Esophagus squamous epithelium (tissue), 5 donors: ENCODE measurements at regions of chr2 and their contacts with region 1.

Region 1: DNA sequence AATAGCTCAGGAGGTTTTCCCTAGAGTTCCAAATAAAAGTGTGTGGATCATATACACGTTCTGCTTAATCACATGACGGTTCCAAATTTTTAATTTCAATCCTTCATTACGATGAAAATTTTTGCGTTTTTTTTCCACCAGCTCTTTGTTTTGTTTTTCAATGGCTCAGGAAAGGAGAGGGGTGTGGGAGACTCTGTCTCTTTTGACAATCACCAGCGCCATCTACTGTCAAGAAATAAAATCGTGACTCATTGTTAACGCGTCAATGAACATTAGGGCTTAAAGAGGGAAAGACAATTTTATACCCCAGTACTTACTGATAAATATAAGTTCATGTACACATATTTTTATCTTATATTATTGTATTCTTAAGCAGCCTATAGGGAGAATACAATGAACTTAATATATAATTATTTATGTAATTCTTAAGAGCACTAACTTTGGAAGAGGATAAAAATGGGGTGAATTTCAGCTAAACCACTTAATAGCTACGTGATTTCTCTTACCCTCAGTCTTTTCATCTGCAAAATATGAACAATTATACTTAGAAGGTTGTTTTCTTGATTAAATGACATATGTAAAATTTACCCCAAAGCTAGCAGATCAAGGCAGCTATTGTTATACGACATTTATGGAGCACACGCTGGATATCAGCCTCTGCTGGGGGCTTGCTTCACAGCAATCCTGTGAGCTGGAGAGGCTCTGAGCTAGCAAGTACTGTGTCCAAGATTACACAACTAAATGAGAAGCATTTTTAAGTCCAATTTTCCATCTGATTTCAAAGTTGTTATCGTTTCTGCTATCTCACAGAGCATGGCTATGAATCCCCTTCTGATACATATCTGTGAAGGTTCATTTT is 47.4 kb upstream of the RMDN2 start:
- DNase-seq: no peak
- H3K4me3 ChIP-seq: no peak overlapping the region
- H3K27ac ChIP-seq: no peak overlapping the region
- H3K4me1 ChIP-seq: peaks cover 0 to 11% (median 0%) of the 10 kb centered on the region in 3 donors
- H3K27me3 ChIP-seq: peaks cover 0 to 31% (median 0%) of the 10 kb centered on the region in 4 donors
- CTCF ChIP-seq: peak; percentile 45 to 81 (median 70)
- POLR2A ChIP-seq: no peak

Region 2: DNA sequence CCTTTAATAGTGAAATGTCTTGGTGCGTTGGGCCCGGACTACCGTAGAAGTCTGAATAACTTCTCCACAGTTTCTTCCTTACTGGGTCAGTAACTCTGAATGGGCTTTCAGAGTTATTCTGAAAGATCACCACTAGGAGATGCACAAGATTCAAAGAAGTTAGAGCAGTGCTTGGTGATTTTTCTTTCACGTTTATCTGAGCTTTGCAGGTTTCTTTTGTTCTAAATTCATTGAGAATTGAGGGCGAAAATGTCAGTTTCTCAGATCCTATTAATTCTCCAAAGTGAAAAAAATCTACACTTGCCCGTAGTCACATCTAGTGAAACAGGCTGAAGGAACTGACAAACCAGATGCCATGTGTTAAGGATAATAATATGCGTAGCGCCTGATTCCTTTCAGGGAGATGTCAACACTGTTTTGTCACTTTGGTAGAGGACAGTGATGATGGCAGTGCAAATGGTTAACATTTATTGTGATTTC is 463.2 kb before region 1 on chr2:
- intact Hi-C with region 1: loop called (anchors 5 kb)
- DNase-seq: no peak
- H3K4me3 ChIP-seq: no peak overlapping the region
- H3K27ac ChIP-seq: no peak overlapping the region
- H3K4me1 ChIP-seq: peaks cover 0 to 13% (median 8%) of the 10 kb centered on the region in 3 donors
- H3K27me3 ChIP-seq: peaks cover 0 to 51% (median 0%) of the 10 kb centered on the region in 4 donors
- CTCF ChIP-seq: peak; percentile 67 to 94 (median 84)
- POLR2A ChIP-seq: no peak